Right ventricle myocardium inferior (tissue), 1 donor: ENCODE measurements at regions of chr14 and their contacts with region 1.

Region 1: DNA sequence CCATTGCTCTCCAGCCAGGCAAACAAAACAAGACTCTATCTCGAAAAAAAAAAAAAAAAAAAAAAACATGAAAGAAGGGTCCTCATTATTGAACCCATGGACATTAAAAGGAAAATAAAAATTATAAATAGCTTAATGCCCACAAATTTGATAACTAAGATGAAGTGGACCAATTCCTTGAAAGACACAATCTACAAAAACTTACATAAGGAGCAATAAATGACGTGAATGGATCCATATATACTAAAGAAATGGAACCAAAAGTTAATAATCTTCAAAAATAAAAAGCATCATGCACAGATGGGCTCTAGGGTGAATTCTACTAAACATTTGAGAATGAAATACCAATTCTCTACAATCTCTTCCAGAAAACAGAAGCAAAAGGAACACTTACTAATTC is 47.7 kb upstream of the AP4S1 start:
- DNase-seq: no peak
- ATAC-seq: no peak

Region 2: GRCh38 chr14:31084385-31084784 is 106.6 kb after region 1 on chr14:
- intact Hi-C with region 1: loop called (anchors 1 kb)
- DNase-seq: no peak
- ATAC-seq: no peak

Region 3: DNA sequence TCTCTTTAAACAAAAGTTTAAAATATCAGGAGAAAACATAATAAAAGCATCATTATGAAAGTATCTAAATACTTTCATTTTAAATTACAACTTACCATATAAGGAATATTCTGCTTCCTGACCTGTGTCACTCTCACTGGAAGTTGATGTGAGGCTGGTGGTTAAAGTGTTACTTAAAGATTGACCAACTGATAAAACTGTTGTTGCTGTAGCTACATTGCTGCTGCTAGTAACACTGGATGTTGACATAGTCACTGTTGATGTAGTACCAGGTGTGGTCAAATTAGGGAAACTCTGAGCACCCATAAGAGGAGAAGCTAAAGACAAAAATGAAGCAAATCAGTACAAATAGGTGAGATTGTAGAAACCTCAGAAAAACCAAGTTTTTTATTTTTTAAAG is 149.9 kb after region 1 on chr14:
- intact Hi-C with region 1: no loop called
- DNase-seq: no peak
- ATAC-seq: no peak